Activated CD4-positive, alpha-beta memory T cell treated with anti-CD3 and anti-CD28 coated beads, Interleukin-2, amount 10 ng/mL, durations not matched to agents 7 days and 5 days (primary cell): ENCODE measurements at regions of chr13 and their contacts with region 1.

Region 1: DNA sequence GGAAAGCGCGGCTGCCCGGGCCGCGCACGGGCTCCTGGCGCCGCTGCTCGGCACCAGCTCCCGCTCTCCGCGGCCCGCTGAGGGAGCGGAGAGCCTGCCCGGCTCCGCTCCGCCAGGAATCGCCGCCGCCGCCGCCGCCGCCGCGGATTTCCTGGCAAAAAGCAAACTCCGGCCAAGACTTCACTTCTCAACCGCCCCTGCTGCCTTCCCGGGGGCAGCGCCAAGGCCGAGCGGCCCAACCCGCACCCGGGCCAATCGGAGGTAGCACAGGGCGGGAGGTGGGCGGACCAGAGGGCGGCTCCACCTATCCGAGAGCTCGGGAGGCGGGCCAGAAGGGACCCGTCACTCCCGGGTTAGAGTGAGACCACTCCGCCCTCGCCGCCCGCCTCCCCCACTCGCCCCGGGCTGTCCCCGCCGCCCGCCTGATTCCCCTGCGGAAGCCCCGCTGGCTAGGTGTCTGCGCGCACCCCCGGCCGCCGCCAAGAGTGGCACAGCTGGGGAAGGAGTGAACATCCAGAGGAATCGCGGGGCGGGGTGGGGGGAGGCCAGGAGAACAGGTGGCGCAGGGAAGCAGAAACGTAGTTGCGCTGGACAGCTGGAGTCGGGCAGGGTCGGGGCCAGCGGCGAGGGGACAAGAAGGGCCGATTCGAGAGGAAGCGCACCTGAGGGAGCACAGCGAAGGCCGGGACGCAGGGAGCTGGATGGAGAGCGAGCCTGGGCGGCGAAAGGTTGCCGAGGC is at the start of gene LNX2:
- DNase-seq: peak; percentile 97
- H3K4me3 Mint-ChIP-seq: peak within 1 kb of the TSS; percentile 94
- H3K27ac Mint-ChIP-seq: peak within 1 kb of the TSS; percentile 94
- H3K4me1 Mint-ChIP-seq: peaks cover 52% of the 10 kb centered on the region
- H3K27me3 Mint-ChIP-seq: no peaks in the 10 kb centered on the region
- total RNA-seq, gene LNX2: 8.0 to 8.1 TPM

Region 2: DNA sequence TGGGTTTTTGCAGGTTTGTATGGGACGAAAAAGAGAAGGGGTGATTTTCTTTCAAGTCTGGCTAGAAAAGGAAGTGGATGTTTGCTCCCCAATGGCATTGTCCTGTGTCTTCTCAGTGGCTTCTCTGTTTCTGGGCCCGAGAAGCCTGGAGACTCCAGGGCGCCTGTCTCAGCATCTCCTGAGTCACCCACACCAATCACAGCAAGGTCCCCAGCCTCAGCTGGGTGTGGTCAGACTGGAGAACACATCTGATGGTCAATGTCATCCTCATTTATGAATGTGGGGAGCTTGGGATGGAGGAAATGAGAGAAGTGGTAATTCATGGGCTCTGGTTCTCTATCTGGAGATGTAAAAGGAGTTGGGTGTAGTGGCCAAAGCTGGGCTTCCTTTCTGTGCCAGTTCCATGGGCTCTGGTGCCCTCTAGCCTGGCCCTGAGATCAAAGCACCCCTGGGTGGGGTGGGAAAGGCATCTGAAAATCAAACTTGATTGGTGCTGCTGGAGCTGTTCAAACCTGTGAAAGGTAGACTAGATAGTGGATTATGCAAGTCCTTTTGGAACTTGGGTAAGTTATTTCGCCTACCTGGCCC is 336.5 kb before region 1 on chr13:
- CTCF ChIA-PET with region 1: no interaction called
- POLR2A ChIA-PET with region 1: no interaction called
- DNase-seq: peak; percentile 22
- H3K4me3 Mint-ChIP-seq: no peak overlapping the region
- H3K27ac Mint-ChIP-seq: no peak overlapping the region
- H3K4me1 Mint-ChIP-seq: peaks cover 4% of the 10 kb centered on the region
- H3K27me3 Mint-ChIP-seq: no peaks in the 10 kb centered on the region

Region 3: DNA sequence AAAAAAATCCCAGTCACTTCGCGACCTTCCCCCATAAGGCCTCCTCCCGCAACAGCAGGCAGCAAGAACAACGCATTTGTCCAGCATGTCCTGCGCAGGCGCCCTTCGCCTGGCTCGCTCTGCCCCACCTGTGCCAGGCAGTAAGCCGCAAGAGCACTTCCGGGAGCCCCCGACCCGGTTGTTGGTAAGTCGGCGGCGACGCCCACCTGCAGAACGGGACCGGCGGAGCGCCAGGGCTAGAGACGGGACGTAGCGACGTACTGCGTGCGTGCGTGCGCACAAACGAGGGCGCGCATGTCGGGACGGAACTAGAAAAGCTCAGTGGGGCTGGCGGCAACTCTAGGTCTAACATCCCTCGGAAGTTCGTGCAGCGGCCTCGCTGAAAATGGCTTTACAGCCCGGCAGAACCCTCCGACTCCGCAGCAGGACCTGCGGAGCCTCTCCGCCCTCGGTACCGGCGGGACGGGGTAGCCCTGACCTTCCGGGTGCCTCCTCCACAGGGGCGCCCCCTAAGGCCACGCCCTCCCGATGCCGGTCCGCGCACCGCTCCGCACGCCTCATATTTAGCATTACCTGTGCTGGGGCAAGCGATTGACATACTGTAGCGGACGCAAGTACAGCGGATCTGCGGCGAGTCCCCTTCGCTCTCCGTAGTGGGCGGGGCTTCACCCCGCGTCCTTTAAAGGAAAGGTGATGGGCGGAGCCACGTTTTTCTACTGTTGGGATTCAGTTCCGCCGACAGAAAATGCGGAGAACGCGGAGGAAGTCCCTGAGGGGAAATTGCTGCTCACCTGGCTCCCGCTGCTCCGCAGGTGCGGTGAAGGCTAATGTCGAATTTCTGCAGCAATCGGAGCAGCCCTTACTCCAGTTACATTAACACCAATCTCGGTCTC is 170.4 kb before region 1 on chr13 and contains the start of gene MTIF3:
- CTCF ChIA-PET with region 1: interaction called, 5 read pairs
- POLR2A ChIA-PET with region 1: interaction called, 53 read pairs
- DNase-seq: peak; percentile 97
- H3K4me3 Mint-ChIP-seq: peak within 1 kb of the TSS; percentile 92
- H3K27ac Mint-ChIP-seq: peak within 1 kb of the TSS; percentile 93
- H3K4me1 Mint-ChIP-seq: peaks cover 60% of the 10 kb centered on the region
- H3K27me3 Mint-ChIP-seq: no peaks in the 10 kb centered on the region
- total RNA-seq, gene MTIF3: 61.6 to 61.8 TPM

Region 4: DNA sequence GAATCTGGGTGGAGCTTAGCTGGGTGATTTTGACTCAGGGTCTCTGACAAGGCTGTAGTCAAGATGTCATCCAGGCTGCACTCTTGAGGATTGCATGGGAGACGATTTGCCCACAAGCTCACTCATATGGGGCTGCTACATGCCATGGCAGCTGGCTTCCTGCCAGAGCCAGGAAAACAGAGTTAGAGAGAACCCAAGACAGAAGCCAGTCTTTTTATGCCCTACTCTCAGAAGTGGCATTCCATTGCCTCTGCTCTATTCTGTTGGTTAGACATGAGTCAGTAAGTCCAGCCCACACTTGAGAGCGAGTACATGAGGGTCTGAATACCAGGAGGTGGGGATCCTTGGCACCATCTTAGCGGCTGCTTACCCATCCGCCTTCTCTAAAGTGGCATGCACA is 10.6 kb after region 1 on chr13:
- CTCF ChIA-PET with region 1: interaction called, 3 read pairs
- POLR2A ChIA-PET with region 1: interaction called, 16 read pairs
- DNase-seq: no peak
- H3K4me3 Mint-ChIP-seq: no peak overlapping the region
- H3K27ac Mint-ChIP-seq: no peak overlapping the region
- H3K4me1 Mint-ChIP-seq: peaks cover 29% of the 10 kb centered on the region
- H3K27me3 Mint-ChIP-seq: no peaks in the 10 kb centered on the region

Region 5: GRCh38 chr13:27638521-27638920 is 18.0 kb after region 1 on chr13:
- CTCF ChIA-PET with region 1: interaction called, 3 read pairs
- POLR2A ChIA-PET with region 1: interaction called, 17 read pairs
- DNase-seq: no peak
- H3K4me3 Mint-ChIP-seq: no peak overlapping the region
- H3K27ac Mint-ChIP-seq: no peak overlapping the region
- H3K4me1 Mint-ChIP-seq: peaks cover 24% of the 10 kb centered on the region
- H3K27me3 Mint-ChIP-seq: no peaks in the 10 kb centered on the region